ENCODE measurements at regions of chr19 and their contacts with region 1.

Region 1: DNA sequence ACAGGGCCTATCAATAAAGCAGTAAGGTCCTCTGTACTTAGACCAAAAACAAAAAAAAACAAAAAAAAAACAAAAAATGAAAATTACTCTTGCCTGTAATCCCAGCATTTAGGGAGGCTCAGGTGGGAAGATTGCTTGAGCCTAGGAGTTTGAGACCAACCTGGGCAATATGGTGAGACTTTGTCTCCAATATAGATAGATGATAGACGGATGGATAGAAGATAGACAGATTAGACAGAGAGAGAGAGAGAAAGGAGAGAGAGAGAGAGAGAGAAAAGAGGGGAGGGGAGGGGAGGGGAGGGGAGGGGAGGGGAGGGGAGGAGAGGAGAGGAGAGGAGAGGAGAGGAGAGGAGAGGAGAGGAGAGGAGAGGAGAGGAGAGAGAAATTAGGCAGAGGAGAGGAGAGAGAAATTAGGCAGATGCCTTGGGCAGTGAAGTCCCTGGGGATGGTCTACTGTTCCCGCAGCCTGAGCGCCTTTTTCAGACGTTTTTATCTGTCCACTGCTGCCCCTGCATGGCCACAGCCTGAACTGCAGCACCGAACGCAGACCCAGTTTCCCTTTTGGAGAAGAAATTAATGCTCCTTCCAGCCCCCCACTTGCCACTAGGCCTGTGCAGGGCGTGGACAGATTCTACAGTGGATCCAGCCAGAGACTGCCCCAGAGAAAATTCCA is 9.8 kb upstream of the ZNF627 start:
- DNase-seq: peak; percentile 42
- ATAC-seq: peak; percentile 93
- H3K4me3 ChIP-seq: no peak overlapping the region
- H3K27ac ChIP-seq: no peak overlapping the region
- H3K4me1 ChIP-seq: peaks cover 0 to 4% of the 10 kb centered on the region in 2 experiments; a peak in 1 of 4 replicates
- H3K27me3 ChIP-seq: no peaks in the 10 kb centered on the region
- CTCF ChIP-seq: peak; percentile 67 to 88 (median 84); a peak in 5 of 6 replicates
- POLR2A ChIP-seq: no peak
- RAD21 ChIP-seq: peak; percentile 84

Region 2: GRCh38 chr19:11496391-11497163 is 90.9 kb before region 1 on chr19:
- CTCF ChIA-PET with region 1: no interaction called
- POLR2A ChIA-PET with region 1: no interaction called
- RAD21 ChIA-PET with region 1: interaction called in 1 of 2 experiments, 3 read pairs
- intact Hi-C with region 1: loop called (anchors 1 kb)
- DNase-seq: peak; percentile 81
- ATAC-seq: peak; percentile 99
- H3K4me3 ChIP-seq: no peak overlapping the region
- H3K27ac ChIP-seq: peak overlapping the region; percentile 42
- H3K4me1 ChIP-seq: peaks cover 4 to 15% of the 10 kb centered on the region in 2 experiments
- H3K27me3 ChIP-seq: no peaks in the 10 kb centered on the region
- CTCF ChIP-seq: peak; percentile 86 to 97 (median 94)
- POLR2A ChIP-seq: no peak
- RAD21 ChIP-seq: peak; percentile 82

Measured in HCT116 (cell line).